ENCODE measurements at regions of chr7 and their contacts with region 1.

Region 1: DNA sequence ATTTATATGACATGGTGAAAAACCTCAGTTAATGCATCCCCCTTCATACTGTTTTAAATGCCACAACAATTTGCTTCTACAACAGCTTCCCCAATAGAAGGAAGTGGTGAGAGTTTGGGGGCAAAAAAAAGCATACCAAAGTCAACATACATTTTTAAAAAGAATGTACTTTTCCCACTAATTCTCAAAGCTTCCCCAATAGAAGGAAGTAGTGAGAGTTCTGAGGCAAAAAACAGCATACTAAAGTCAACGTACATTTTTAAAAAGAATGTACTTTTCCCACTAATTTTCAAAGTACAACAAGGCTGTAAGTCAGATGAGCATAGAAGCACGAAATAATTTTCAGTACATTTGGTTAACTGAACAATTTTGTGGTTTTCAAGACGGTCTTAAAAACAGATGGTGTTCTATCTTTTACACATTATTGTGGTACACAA is 24.0 kb downstream of the WASL start:
- DNase-seq: no peak
- H3K4me3 ChIP-seq: no peak overlapping the region
- H3K27ac ChIP-seq: no peak overlapping the region
- H3K4me1 ChIP-seq: peaks cover 0 to 89% (median 56%) of the 10 kb centered on the region in 4 donors
- H3K27me3 ChIP-seq: no peaks in the 10 kb centered on the region
- CTCF ChIP-seq: no peak
- EP300 ChIP-seq: no peak
- POLR2A ChIP-seq: no peak

Region 2: DNA sequence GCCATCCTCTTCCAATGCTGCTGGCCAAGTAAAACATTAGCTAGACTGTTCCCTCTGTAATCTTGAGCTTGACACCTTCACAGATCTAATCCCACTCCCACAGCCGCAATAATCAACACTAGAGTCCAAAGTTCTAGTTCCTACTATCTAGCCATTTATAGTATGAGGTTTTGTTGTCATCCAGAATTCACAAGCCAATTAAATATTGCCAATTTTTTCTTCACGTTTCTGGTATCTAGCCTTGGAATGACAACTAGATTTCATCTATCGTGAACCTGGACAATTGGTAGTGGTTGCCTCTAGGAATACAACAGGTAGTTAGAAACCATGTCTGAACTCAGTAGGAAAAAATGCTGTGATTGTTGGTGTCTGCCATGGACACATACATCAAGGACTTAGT is 13.5 kb after region 1 on chr7:
- intact Hi-C with region 1: loop called (anchors 1 kb)
- DNase-seq: no peak
- H3K4me3 ChIP-seq: no peak overlapping the region
- H3K27ac ChIP-seq: no peak overlapping the region
- H3K4me1 ChIP-seq: peaks cover 0 to 30% (median 23%) of the 10 kb centered on the region in 4 donors
- H3K27me3 ChIP-seq: no peaks in the 10 kb centered on the region
- CTCF ChIP-seq: no peak
- EP300 ChIP-seq: no peak
- POLR2A ChIP-seq: no peak

Region 3: DNA sequence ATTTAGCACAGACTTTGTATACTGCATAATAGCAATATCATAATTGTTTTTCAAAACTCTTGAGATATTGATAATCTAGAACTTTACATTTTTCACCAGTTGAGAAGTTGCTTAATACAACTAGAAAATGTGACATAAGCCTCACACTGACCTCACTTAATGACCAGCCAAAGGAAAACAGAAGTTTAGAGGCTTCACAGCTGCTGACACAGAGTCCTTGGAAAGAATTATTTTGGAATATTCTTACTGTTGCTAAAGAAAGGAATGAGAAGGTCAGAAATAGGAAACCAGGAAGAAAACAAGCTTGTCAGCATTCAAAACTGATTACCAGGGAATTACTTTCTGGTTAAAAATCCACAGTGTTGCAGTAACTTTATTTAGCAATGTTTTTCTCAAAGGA is 59.4 kb after region 1 on chr7:
- intact Hi-C with region 1: no loop called
- DNase-seq: no peak
- H3K4me3 ChIP-seq: no peak overlapping the region
- H3K27ac ChIP-seq: peak overlapping the region in 3 of 4 donors; percentile 10 to 30 (median 30)
- H3K4me1 ChIP-seq: no peaks in the 10 kb centered on the region
- H3K27me3 ChIP-seq: no peaks in the 10 kb centered on the region
- CTCF ChIP-seq: no peak
- EP300 ChIP-seq: no peak
- POLR2A ChIP-seq: no peak